Activated CD8-positive, alpha-beta T cell treated with anti-CD3 and anti-CD28 coated beads, Interleukin-2, amount 10 ng/mL, durations not matched to agents 7 days and 5 days (primary cell): ENCODE measurements at regions of chr3 and their contacts with region 1.

Region 1: DNA sequence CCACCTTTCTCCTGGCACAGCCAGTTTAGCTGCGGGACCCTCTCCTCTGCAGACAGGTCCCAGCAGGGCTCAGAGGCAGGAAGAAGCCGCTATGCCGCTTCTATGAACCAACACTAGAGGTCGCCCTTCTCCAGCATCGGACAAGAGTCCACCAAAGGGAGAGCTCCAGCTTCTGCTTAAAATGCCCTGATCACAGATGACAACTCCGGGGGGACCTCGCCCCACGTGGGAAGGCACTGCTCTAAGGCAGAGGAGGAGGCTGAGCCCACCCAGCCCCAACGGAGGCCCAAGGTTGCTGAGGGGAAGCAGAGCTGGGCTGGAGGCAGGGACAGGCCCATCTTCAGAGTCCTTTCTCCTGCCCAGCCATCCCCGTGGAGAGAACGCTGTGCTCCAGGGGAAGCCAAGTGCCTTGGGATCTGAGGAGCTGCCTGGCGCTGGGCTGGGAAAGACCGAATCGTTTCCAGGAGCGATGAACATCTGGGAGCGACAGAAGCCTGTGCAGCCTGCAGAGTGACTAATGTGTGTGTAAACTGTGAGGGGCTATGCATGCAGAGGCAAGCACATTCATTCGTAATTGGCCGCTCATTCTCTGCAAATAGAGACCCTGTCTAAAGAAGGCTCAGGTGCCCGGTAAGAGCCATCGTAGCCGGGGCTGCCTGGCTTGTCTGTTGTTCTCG is 43.5 kb upstream of the BDH1 start:
- DNase-seq: peak; percentile 89
- ATAC-seq: peak; percentile 99
- H3K4me3 Mint-ChIP-seq: no peak overlapping the region
- H3K27ac Mint-ChIP-seq: peak overlapping the region; percentile 70
- H3K4me1 Mint-ChIP-seq: peaks cover 44% of the 10 kb centered on the region
- H3K27me3 Mint-ChIP-seq: no peaks in the 10 kb centered on the region

Region 2: DNA sequence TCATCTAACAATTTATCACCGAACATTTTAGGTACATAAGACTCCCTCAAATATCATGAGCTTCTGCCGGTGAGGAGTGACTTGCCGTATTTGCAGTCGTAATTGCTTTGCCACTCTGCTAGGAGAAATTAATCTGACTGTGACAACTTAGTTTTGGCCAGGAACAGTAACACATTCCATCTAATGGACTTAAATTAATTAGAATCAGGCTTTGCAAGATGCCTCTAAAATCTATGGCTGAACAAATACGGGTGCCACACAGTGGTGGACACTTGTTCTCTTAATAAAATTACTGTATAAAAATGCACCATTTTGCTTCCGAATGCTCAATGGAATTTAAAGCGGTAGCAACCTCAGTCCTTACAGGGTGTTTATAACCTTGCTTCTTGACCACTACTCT is 15.9 kb before region 1 on chr3:
- CTCF ChIA-PET with region 1: interaction called, 19 read pairs
- POLR2A ChIA-PET with region 1: interaction called, 3 read pairs
- DNase-seq: no peak
- ATAC-seq: no peak
- H3K4me3 Mint-ChIP-seq: no peak overlapping the region
- H3K27ac Mint-ChIP-seq: no peak overlapping the region
- H3K4me1 Mint-ChIP-seq: peaks cover 15% of the 10 kb centered on the region
- H3K27me3 Mint-ChIP-seq: no peaks in the 10 kb centered on the region

Region 3: GRCh38 chr3:197613199-197613598 is 14.0 kb after region 1 on chr3:
- CTCF ChIA-PET with region 1: interaction called, 136 read pairs
- POLR2A ChIA-PET with region 1: no interaction called
- DNase-seq: peak; percentile 54
- ATAC-seq: peak; percentile 90
- H3K4me3 Mint-ChIP-seq: peak overlapping the region; percentile 12
- H3K27ac Mint-ChIP-seq: peak overlapping the region; percentile 85
- H3K4me1 Mint-ChIP-seq: peaks cover 28% of the 10 kb centered on the region
- H3K27me3 Mint-ChIP-seq: no peaks in the 10 kb centered on the region

Region 4: GRCh38 chr3:197711973-197712707 is 112.9 kb after region 1 on chr3:
- CTCF ChIA-PET with region 1: interaction called, 17 read pairs
- POLR2A ChIA-PET with region 1: no interaction called
- DNase-seq: peak; percentile 92
- ATAC-seq: peak; percentile 100
- H3K4me3 Mint-ChIP-seq: peak overlapping the region; percentile 77
- H3K27ac Mint-ChIP-seq: peak overlapping the region; percentile 98
- H3K4me1 Mint-ChIP-seq: peaks cover 38% of the 10 kb centered on the region
- H3K27me3 Mint-ChIP-seq: no peaks in the 10 kb centered on the region

Region 5: DNA sequence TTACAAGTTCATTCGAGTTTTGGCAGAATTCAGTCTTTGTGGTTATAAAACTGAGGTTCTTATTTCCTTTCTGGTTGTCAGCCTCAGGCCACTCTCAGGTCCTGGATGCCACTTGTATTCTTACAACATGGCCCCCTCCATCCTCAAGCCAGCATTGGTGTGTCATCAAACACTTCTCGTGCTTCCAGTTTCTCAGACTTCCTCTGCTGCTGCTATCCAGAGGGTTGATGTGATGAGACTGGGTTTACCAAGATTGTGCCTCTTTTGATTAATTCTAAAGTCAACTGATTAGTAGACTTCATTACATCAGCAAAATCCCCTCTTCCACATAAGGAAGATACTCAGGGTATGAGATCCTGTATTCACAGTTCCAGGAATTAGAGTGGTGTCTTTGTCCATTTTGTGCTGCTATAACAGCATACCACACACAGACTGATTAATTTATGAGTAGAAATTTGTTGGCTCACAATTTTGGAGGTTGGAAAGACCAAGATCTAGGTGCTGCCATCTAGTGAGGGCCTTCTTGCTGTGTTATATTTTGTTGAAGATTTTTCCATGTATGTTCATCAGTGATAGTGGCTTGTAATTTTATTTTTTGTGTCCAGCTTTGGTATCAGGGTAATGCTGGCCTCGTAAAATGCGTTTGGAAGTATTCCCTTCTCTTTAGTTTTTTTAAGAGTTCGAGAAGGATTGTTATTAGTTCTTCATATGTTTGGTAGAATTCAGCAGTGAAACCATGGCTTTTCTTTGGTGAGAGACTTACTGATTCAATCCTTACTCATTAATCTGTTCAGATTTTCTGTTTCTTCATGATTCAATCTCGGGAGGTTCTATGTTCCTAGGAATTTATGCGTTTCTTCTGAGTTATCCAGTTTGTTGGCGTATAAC is 202.9 kb after region 1 on chr3:
- CTCF ChIA-PET with region 1: interaction called, 10 read pairs
- POLR2A ChIA-PET with region 1: no interaction called
- DNase-seq: peak; percentile 62
- ATAC-seq: peak; percentile 77
- H3K4me3 Mint-ChIP-seq: peak overlapping the region; percentile 37
- H3K27ac Mint-ChIP-seq: peak overlapping the region; percentile 78
- H3K4me1 Mint-ChIP-seq: peaks cover 45% of the 10 kb centered on the region
- H3K27me3 Mint-ChIP-seq: no peaks in the 10 kb centered on the region